GM12878 (cell line): ENCODE measurements at regions of chr16 and their contacts with region 1.

Region 1: DNA sequence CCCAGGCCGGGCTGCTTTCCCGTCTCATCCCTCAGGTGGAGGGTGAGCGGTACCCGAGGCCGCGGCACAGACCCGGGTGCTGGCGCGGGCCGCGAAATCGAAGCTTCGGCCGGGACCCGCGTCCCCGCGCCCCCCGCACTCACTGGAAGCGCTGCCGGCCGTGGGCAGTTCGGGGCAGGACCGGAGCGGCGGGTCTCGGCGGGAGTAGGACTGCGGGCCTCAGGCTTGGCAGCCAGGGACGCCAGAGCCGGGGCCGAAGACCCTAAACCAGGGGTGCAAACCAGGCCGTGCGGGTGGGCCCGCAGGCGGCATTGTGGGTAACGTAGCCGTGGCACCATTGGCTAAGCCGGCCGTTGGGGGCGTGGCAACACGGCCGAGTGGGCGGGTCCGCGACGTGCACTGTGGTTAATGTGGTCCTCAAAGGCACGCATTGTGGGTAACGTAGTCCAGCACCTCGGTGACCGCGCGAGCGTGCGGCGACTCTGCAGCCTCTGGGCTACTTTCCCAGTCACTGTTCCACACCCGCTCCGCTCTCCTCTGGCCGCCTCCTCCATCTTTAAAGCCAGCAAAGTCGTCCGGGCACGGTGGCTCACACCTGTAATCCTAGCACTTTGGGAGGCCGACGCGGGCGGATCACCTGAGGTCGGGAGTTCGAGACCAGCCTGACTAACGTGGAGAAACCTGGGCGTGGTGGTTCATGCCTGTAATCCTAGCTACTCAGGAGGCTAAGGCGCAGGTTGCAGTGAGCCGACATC is at the start of gene ZNF500:
- DNase-seq: peak; percentile 84
- ATAC-seq: peak; percentile 94
- H3K4me3 ChIP-seq: peak within 1 kb of the TSS; percentile 91
- H3K27ac ChIP-seq: peak within 1 kb of the TSS; percentile 63
- H3K4me1 ChIP-seq: peaks cover 8% of the 10 kb centered on the region; the same call in 1 of the 2 replicates
- H3K27me3 ChIP-seq: no peaks in the 10 kb centered on the region
- CTCF ChIP-seq: no peak
- EP300 ChIP-seq: peak in 1 of 2 experiments; percentile 39; a peak in 1 of 4 replicates
- POLR2A ChIP-seq: peak; percentile 72
- RAD21 ChIP-seq: no peak
- polyA plus RNA-seq, gene ZNF500: 0.99 to 1.0 TPM

Region 2: GRCh38 chr16:4734063-4734729 is 32.9 kb before region 1 on chr16 and contains the starts of genes ANKS3 and DNAAF8:
- CTCF ChIA-PET with region 1: interaction called, 7 read pairs
- POLR2A ChIA-PET with region 1: interaction called, 15 read pairs
- RAD21 ChIA-PET with region 1: interaction called, 18 read pairs
- SMC1A ChIA-PET with region 1: interaction called, 15 read pairs
- in situ Hi-C with region 1: no loop called
- intact Hi-C with region 1: loop called (anchors 2 kb)
- DNase-seq: peak; percentile 59
- ATAC-seq: peak; percentile 92
- H3K4me3 ChIP-seq: peak within 1 kb of the TSS; percentile 87
- H3K27ac ChIP-seq: peak within 1 kb of the TSS; percentile 73
- H3K4me1 ChIP-seq: peaks cover 2% of the 10 kb centered on the region; the same call in 1 of the 2 replicates
- H3K27me3 ChIP-seq: no peaks in the 10 kb centered on the region
- CTCF ChIP-seq: no peak
- EP300 ChIP-seq: no peak
- POLR2A ChIP-seq: peak; percentile 85
- RAD21 ChIP-seq: no peak
- polyA plus RNA-seq, gene ANKS3: 0.29 to 0.52 TPM
- polyA plus RNA-seq, gene DNAAF8: not detected

Region 3: DNA sequence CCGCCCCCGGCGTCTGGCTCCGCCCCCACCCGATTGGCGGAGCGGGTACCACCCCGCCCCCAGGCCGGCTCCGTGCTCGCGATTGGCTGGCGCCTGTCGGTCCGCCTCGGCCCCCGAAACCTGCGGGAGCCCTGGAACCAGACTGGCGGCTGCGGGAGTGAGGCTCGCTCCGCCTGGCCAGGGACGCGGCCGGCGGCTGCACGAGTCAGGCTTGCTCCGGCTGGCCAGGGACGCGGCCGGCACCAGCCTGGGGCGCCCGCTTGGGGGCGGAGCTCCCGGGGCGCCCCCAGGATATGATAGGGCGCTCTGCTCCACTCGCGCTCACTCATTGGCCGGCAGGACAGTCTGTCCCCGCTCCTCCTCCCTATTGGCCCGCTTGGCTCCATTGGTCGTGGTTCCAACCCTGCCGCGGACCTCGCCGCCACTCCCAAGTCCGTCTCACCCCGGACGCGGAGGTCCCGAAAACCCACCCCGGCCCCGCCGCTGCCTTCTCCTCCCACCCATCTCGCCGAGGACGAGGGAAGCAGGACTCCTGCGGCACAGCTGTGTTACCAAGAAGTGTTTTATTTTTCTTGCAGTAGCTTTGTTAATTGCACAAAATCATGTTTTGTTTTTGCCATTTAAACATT is 35.7 kb after region 1 on chr16:
- CTCF ChIA-PET with region 1: interaction called, 3 read pairs
- POLR2A ChIA-PET with region 1: interaction called, 8 read pairs
- RAD21 ChIA-PET with region 1: interaction called, 6 read pairs
- SMC1A ChIA-PET with region 1: interaction called, 4 read pairs
- in situ Hi-C with region 1: no loop called
- intact Hi-C with region 1: loop called (anchors 2 kb)
- DNase-seq: peak; percentile 47
- ATAC-seq: peak; percentile 97
- H3K4me3 ChIP-seq: peak overlapping the region; percentile 72
- H3K27ac ChIP-seq: peak overlapping the region; percentile 20; the same call in 1 of the 2 replicates
- H3K4me1 ChIP-seq: peaks cover 20% of the 10 kb centered on the region
- H3K27me3 ChIP-seq: no peaks in the 10 kb centered on the region
- CTCF ChIP-seq: no peak
- EP300 ChIP-seq: no peak
- POLR2A ChIP-seq: peak; percentile 74
- RAD21 ChIP-seq: no peak

Region 4: DNA sequence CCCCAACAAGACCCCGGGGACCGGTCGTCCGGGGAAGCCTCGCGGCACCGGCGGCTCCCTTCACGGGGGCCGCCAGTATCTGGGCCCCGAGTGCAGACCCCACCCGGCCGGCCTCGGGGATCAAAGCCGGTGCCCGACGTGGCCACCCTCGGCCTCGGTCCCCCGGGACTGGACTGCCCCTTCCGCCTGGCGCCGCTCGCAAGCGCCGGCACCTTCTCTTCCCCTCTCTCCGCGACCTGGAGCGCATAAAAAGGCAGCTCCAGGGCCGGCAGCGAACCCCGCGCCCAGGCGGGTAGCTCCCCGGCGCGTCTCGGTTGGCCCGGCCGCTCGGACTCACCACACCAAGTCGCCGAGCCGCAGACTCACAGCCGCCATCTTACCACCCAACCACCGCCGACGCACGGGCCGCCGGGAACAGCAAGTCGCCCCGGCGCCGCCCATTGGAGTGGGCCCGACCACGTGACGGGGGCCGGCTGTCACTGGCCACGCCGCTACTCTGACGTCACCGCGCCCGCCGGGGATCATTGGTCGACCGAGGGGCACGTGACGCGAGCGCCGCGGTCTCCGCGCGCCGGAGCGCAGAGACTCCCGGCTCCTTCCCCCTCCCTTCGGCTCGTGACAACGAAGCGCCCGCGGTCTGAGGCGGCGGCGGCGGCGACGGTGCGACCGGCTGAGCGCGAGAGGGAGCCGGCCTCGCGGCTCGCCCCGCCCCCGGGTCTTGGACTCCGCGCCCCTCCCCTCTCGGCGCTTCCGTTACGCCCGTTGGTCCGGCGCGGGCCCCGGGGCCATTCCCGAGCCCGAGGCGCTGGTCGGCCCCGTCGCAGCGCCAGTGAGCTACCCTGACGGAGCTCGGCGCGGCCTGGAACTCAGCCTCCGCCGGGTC is 80.1 kb after region 1 on chr16 and contains the starts of genes GLYR1 and UBN1:
- CTCF ChIA-PET with region 1: no interaction called
- POLR2A ChIA-PET with region 1: no interaction called
- RAD21 ChIA-PET with region 1: no interaction called
- SMC1A ChIA-PET with region 1: no interaction called
- in situ Hi-C with region 1: no loop called
- intact Hi-C with region 1: loop called (anchors 2 kb)
- DNase-seq: peak; percentile 83
- ATAC-seq: peak; percentile 91
- H3K4me3 ChIP-seq: peak within 1 kb of the TSS; percentile 91
- H3K27ac ChIP-seq: peak within 1 kb of the TSS; percentile 85
- H3K4me1 ChIP-seq: no peaks in the 10 kb centered on the region
- H3K27me3 ChIP-seq: no peaks in the 10 kb centered on the region
- CTCF ChIP-seq: no peak
- EP300 ChIP-seq: no peak
- POLR2A ChIP-seq: peak; percentile 96
- RAD21 ChIP-seq: no peak
- polyA plus RNA-seq, gene GLYR1: 7.3 to 10.1 TPM
- polyA plus RNA-seq, gene UBN1: 2.1 to 2.2 TPM